Prostate gland (tissue), 2 donors: ENCODE measurements at regions of chr5 and their contacts with region 1.

Region 1: DNA sequence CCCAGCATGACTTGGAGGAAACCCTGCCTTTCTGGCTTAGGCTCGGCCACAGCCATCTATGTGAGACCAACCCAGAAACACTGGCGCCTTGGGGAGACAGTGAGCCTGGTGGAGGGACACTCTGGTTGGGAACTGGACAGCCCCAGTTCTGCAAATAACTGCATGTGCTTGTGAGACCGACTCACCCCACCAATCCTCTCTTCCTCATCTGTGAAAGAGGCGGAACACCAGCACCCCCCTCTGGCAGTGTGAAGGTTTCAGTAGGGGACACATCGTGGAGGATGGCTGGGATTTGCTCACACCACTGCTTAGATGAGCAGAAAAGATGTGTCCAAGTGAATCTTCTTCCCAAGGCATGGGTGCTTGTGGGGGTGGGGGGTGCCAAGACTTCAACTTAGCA is 43.4 kb upstream of the N4BP3 start:
- DNase-seq: peak; percentile 34
- H3K4me3 ChIP-seq: no peak overlapping the region
- H3K27ac ChIP-seq: no peak overlapping the region
- H3K4me1 ChIP-seq: no peaks in the 10 kb centered on the region
- H3K27me3 ChIP-seq: no peaks in the 10 kb centered on the region
- CTCF ChIP-seq: peak in 3 of 4 experiments; percentile 9 to 33 (median 30)
- POLR2A ChIP-seq: no peak

Region 2: DNA sequence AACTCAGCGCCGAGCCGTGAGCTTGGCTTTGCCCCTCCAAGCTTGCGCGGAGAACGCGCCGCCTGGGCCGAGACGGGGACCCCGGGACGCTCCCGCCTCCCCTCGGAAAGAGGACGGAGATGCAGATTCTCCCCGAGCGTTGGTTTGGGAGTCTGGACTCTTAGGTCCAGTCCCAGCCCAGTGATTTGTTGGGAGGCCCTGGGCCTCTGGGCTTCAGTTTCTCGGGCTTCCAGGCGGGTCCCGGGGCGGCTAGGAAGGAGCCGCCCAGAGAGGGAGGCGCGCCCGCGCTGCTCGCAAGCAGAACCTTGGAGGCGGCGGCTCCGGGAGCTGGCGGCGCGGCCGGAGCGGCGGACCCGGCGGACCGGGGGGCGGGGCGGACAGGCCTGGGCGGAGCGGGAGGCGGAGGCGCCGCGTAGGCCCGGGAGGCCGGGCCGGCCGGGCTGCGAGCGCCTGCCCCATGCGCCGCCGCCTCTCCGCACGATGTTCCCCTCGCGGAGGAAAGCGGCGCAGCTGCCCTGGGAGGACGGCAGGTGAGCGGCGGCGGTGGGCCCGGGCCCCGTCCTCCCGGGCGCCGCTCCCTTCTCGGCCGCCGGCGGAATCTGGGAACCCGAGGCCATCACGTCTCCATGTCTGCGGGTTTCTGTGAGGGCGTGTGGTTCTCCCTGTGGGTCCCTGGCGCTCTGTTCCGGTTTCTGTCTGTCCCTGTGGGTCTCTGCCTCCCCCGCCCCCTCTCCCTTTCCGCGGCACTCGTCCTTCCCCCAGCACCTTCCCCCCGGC is 470.0 kb before region 1 on chr5 and contains the start of gene B4GALT7:
- intact Hi-C with region 1: loop called (anchors 10 kb)
- DNase-seq: peak; percentile 68
- H3K4me3 ChIP-seq: peak within 1 kb of the TSS; percentile 57 to 93
- H3K27ac ChIP-seq: peak within 1 kb of the TSS; percentile 84 to 89
- H3K4me1 ChIP-seq: peaks cover 2% of the 10 kb centered on the region
- H3K27me3 ChIP-seq: no peaks in the 10 kb centered on the region
- CTCF ChIP-seq: no peak
- POLR2A ChIP-seq: peak; percentile 84
- total RNA-seq, gene B4GALT7: 41.6 to 66.2 TPM

Region 3: DNA sequence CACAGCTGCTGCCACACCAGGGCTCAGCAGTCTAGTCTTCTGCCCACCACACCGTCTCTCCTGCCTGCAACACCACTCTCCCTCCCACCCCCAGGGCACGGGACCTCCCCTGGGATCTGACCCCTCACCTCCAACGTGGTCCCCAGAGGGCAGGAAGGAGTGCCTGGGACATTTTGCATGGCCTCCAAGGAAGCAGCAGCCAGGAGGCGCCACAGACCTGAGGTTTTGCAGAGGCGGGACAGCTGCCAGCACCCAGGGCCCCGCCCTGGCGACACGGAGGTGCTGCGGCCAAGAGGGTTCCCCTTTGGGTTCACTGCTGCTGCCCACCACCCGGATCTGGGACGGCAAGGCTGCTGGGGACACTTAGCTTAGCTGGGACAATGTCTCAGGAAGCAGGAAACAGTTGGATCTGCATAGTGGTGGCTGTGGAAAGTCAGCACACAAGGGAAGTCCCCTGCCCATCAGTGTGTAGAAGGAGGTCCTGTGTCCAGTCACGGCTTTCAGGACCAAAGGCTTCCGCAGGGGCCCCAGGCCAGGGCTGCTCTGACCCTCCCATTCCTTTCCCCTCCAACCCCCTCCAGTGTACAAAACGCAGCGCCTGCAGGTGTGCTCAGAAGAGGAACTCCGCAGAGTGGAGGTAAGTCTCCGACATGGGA is 87.7 kb before region 1 on chr5:
- intact Hi-C with region 1: loop called (anchors 10 kb)
- DNase-seq: no peak
- H3K4me3 ChIP-seq: no peak overlapping the region
- H3K27ac ChIP-seq: no peak overlapping the region
- H3K4me1 ChIP-seq: no peaks in the 10 kb centered on the region
- H3K27me3 ChIP-seq: no peaks in the 10 kb centered on the region
- CTCF ChIP-seq: peak in 3 of 4 experiments; percentile 31 to 73 (median 44)
- POLR2A ChIP-seq: no peak